Activated CD8-positive, alpha-beta T cell treated with anti-CD3 and anti-CD28 coated beads, Interleukin-2, amount 10 ng/mL, durations not matched to agents 7 days and 5 days (primary cell): ENCODE measurements at regions of chr3 and their contacts with region 1.

Region 1: DNA sequence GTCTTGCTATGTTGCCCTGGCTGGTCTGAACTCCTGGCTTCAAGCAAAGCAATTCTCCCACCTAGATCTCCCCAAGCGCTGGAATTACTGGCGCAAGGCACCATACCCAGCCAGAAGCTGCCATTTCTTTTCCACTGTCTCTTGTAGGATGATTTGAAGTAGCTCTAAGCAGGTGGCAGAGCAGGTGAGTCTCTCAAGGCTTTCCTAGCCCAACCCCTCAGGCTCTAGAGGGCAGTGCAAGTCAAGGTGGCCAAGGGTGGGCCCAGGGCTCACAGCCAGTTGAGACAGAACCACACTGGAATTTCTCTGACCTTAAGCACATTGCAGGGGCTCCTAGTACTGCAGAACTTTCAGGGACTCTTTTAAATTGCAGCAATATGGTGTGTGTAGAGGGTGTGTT is 15.6 kb upstream of the DAG1 start:
- DNase-seq: no peak
- ATAC-seq: no peak
- H3K4me3 Mint-ChIP-seq: no peak overlapping the region
- H3K27ac Mint-ChIP-seq: no peak overlapping the region
- H3K4me1 Mint-ChIP-seq: peaks cover 3% of the 10 kb centered on the region
- H3K27me3 Mint-ChIP-seq: no peaks in the 10 kb centered on the region

Region 2: DNA sequence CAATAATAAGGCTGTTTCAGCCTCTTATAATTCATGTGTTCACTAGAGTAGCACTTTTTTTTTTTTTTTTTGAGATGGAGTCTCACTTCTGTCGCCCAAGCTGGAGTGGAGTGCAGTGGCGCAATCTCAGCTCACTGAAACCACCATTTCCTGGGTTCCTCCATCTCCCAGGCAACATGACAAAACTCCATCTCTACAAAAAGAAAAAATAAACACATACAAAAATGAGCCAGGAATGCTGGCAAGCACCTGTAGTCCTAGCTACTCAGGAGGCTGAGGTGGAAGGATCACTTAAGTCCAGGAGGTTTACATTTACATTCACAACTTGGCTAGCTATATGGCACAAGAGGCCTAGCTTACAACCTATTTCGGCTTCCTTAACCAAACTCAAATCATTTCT is 121.4 kb before region 1 on chr3:
- CTCF ChIA-PET with region 1: interaction called, 50 read pairs
- POLR2A ChIA-PET with region 1: no interaction called
- DNase-seq: no peak
- ATAC-seq: peak; percentile 62
- H3K4me3 Mint-ChIP-seq: no peak overlapping the region
- H3K27ac Mint-ChIP-seq: peak overlapping the region; percentile 81
- H3K4me1 Mint-ChIP-seq: peaks cover 31% of the 10 kb centered on the region
- H3K27me3 Mint-ChIP-seq: no peaks in the 10 kb centered on the region

Region 3: DNA sequence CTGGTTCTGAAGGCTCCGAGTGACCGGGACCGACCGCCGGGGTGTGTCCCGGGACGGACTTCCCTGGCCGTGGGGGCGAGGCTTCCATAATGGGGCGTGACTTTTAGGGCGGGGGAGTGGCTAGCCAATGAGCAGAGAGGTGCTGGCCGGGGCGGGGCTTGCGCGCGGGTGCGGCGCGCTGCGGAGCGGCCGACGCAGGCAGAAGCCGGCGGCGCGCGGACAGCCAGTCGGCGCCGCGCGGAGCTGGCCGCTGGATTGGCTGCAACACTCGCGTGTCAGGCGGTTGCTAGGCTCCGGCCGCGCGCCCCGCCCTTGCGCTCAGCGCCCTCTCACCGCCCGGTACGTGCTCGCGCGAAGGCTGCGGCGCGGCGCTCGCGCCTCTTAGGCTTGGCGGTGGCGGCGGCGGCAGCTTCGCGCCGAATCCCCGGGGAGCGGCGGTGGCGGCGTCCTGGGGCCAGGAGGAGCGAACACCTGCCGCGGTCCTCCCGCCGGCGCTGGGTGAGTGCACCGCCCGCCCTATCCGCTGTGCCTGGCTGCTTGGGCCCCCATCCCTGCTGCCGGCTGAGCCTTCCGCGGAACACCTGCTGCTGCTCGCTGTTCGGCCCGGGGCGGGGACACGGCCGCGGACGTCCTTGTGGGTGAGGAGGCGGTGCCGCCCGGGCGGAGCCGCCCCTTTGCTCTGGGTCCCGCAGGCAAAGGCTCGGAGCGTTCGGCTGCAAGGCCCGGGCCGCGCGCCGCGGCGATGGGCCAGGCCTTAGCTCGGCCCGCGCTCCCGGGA is 15.7 kb after region 1 on chr3 and contains the start of gene DAG1:
- CTCF ChIA-PET with region 1: interaction called, 10 read pairs
- POLR2A ChIA-PET with region 1: no interaction called
- DNase-seq: peak; percentile 96
- ATAC-seq: peak; percentile 92
- H3K4me3 Mint-ChIP-seq: peak within 1 kb of the TSS; percentile 86
- H3K27ac Mint-ChIP-seq: peak within 1 kb of the TSS; percentile 88
- H3K4me1 Mint-ChIP-seq: peaks cover 23% of the 10 kb centered on the region
- H3K27me3 Mint-ChIP-seq: no peaks in the 10 kb centered on the region
- total RNA-seq, gene DAG1: 18.8 to 19.7 TPM